ENCODE measurements at regions of chr4 and their contacts with region 1.

Region 1: GRCh38 chr4:29081234-29081955 is 1638.8 kb upstream of the PCDH7 start:
- DNase-seq: peak; percentile 54
- ATAC-seq: peak; percentile 33
- H3K4me3 ChIP-seq: no peak overlapping the region
- H3K27ac ChIP-seq: no peak overlapping the region
- H3K4me1 ChIP-seq: peaks cover 13% of the 10 kb centered on the region
- H3K27me3 ChIP-seq: no peaks in the 10 kb centered on the region
- CTCF ChIP-seq: peak; percentile 59

Region 2: DNA sequence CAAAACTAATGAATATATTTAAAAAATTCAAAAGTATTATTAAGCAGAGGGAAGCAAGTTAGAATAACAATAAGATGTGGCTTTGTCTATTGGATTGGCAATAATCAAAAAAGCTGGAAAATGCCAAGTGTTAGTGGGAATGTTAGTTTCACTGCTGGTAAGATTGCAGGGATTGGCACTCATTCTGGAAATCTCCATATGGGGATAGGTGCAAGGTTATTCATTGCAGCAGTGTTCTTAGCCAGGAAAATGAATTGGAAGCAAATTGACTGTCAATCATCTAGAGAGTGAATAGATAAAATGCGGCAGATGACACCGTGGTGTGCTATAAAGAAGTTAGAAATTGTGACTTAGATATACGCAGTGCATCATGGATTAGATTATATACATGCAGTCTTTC is 23.3 kb after region 1 on chr4:
- CTCF ChIA-PET with region 1: no interaction called
- POLR2A ChIA-PET with region 1: no interaction called
- intact Hi-C with region 1: no loop called
- DNase-seq: no peak
- ATAC-seq: no peak
- H3K4me3 ChIP-seq: no peak overlapping the region
- H3K27ac ChIP-seq: no peak overlapping the region
- H3K4me1 ChIP-seq: no peaks in the 10 kb centered on the region
- H3K27me3 ChIP-seq: no peaks in the 10 kb centered on the region
- CTCF ChIP-seq: no peak

Region 3: GRCh38 chr4:29908276-29908675 is 826.9 kb after region 1 on chr4:
- CTCF ChIA-PET with region 1: no interaction called
- POLR2A ChIA-PET with region 1: no interaction called
- intact Hi-C with region 1: loop called (anchors 10 kb)
- DNase-seq: no peak
- ATAC-seq: no peak
- H3K4me3 ChIP-seq: no peak overlapping the region
- H3K27ac ChIP-seq: no peak overlapping the region
- H3K4me1 ChIP-seq: no peaks in the 10 kb centered on the region
- H3K27me3 ChIP-seq: no peaks in the 10 kb centered on the region
- CTCF ChIP-seq: no peak